ENCODE measurements at regions of chr11 and their contacts with region 1.

Region 1: GRCh38 chr11:506238-506994 is 626 bp downstream of the RNH1 start:
- DNase-seq: peak; percentile 91
- ATAC-seq: peak; percentile 85
- H3K4me3 ChIP-seq: peak overlapping the region; percentile 96 to 98
- H3K27ac ChIP-seq: peak overlapping the region; percentile 95
- H3K4me1 ChIP-seq: peaks cover 6 to 22% of the 10 kb centered on the region in 2 experiments; a peak in 3 of 4 replicates
- H3K27me3 ChIP-seq: no peaks in the 10 kb centered on the region
- CTCF ChIP-seq: no peak
- POLR2A ChIP-seq: peak; percentile 64
- RAD21 ChIP-seq: no peak

Region 2: DNA sequence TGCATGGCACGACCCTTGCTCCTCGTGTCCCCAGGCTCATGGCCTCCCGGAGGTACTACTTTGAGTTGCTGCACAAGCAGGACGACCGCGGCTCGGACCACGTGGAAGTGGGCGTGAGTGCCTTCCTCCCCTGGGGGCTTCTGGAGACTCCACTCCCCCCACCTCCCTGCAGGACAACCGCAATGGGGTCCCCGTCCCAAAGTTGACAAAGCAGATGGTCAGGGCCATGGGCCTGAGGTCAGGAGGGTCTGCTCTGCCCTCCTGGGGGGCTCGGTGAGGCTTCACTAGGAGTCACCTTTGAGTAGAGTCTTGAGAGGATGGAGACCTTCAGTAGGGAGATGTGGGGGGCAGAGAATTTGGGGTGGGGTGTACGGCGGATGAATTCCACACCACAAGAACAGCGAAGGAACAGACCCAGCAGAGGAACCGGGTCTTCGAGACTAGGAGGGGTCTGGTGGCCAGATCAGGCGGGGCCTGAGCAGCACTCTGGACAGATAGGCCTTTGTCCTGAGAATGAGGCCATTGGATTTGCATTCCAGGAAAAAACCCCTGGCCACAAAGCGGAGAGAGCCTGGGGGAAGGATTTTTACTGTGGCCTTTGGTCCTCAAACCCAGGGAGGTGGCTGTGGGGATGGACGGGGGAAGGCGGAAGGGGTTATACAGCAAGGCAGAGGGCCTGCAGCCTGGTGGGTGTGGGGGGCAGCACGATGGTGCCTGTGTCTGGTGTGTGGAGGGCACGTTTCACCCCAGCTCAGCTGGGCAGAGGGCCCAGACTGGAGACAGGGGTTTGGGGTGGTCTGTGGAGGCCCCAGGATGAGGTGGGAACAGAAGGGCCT is 132.5 kb before region 1 on chr11:
- CTCF ChIA-PET with region 1: no interaction called
- POLR2A ChIA-PET with region 1: no interaction called
- RAD21 ChIA-PET with region 1: no interaction called
- intact Hi-C with region 1: no loop called
- DNase-seq: no peak
- ATAC-seq: no peak
- H3K4me3 ChIP-seq: no peak overlapping the region
- H3K27ac ChIP-seq: peak overlapping the region; percentile 50; the same call in 1 of the 2 replicates
- H3K4me1 ChIP-seq: peaks cover 0 to 9% of the 10 kb centered on the region in 2 experiments; a peak in 1 of 4 replicates
- H3K27me3 ChIP-seq: no peaks in the 10 kb centered on the region
- CTCF ChIP-seq: no peak
- POLR2A ChIP-seq: no peak
- RAD21 ChIP-seq: no peak

Region 3: DNA sequence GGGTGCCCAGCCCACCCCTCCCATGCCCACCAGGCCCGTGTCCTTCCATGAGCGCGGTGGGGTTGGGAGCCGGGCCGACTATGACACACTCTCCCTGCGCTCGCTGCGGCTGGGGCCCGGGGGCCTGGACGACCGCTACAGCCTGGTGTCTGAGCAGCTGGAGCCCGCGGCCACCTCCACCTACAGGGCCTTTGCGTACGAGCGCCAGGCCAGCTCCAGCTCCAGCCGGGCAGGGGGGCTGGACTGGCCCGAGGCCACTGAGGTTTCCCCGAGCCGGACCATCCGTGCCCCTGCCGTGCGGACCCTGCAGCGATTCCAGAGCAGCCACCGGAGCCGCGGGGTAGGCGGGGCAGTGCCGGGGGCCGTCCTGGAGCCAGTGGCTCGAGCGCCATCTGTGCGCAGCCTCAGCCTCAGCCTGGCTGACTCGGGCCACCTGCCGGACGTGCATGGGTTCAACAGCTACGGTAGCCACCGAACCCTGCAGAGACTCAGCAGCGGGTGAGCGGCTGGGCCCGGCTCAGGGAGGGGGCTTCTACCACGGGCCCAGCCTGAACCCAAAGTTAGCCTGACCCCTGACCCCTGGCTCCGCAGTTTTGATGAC is 109.4 kb before region 1 on chr11:
- CTCF ChIA-PET with region 1: no interaction called
- POLR2A ChIA-PET with region 1: no interaction called
- RAD21 ChIA-PET with region 1: no interaction called
- intact Hi-C with region 1: loop called (anchors 2 kb)
- DNase-seq: no peak
- ATAC-seq: no peak
- H3K4me3 ChIP-seq: no peak overlapping the region
- H3K27ac ChIP-seq: peak overlapping the region; percentile 32; the same call in 1 of the 2 replicates
- H3K4me1 ChIP-seq: peaks cover 21 to 36% of the 10 kb centered on the region in 2 experiments
- H3K27me3 ChIP-seq: no peaks in the 10 kb centered on the region
- CTCF ChIP-seq: no peak
- POLR2A ChIP-seq: no peak
- RAD21 ChIP-seq: no peak

Region 4: DNA sequence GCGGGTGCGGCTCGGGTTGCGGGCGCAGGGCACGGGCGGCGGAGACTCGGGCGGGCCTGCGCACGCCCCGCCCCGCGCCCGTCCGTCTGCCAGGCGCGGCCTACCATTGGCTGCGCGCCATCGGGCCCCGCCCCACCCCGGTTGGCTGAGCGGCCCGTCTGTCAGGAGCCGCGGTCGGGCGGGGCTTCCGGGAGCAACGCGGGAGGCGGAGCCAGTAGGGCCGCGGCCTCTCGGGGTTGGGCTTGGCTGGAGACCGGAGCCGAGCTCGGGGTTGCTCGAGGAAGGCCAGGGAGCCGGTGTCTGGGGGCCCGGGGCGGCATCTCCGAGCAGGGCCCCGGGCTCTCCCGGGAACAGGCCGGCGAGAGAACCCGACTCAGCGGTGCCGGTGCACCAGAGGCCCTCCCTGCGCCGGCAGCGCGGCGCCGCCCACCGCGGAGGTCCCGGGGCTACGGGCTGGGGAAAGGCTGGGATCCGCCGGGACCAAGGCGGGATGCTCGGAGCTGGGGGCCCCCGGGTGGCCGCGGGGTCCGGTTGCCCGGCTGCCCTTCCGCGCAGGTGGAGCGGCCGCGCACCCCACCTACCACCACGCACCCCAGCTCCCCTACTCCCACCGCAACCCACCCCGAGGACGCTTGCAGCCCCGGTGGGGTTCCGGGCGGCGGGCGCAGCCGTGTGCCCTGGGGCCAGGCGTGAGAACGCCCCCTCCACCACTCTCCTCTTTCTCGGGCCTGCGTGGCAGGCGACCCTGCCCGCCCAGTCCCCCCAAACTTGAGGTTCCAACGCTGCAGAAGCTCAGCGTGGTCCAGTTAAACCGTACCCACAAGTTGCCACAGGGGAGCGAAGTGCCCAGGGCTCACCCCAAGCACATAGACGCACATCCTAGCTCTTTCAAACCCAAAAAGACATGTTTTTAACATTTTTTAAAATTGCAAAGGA is 29.4 kb after region 1 on chr11 and contains the start of gene HRAS:
- CTCF ChIA-PET with region 1: no interaction called
- POLR2A ChIA-PET with region 1: interaction called, 5 read pairs
- RAD21 ChIA-PET with region 1: no interaction called
- intact Hi-C with region 1: loop called (anchors 2 kb)
- DNase-seq: peak; percentile 86
- ATAC-seq: peak; percentile 83
- H3K4me3 ChIP-seq: peak within 1 kb of the TSS; percentile 76 to 90
- H3K27ac ChIP-seq: peak within 1 kb of the TSS; percentile 100
- H3K4me1 ChIP-seq: peaks cover 15 to 33% of the 10 kb centered on the region in 2 experiments; a peak in 3 of 4 replicates
- H3K27me3 ChIP-seq: no peaks in the 10 kb centered on the region
- CTCF ChIP-seq: no peak
- POLR2A ChIP-seq: peak; percentile 59
- RAD21 ChIP-seq: no peak
- total RNA-seq, gene HRAS: 104 TPM

Measured in HCT116 (cell line).